ENCODE measurements at regions of chr11 and their contacts with region 1.

Region 1: GRCh38 chr11:43852057-43852636 is 28.5 kb upstream of the ALKBH3 start:
- DNase-seq: peak; percentile 63 to 81 (median 72)
- H3K4me3 ChIP-seq: no peak overlapping the region
- H3K27ac ChIP-seq: no peak overlapping the region
- H3K4me1 ChIP-seq: no peaks in the 10 kb centered on the region
- H3K27me3 ChIP-seq: no peaks in the 10 kb centered on the region

Region 2: GRCh38 chr11:43557553-43558110 is 294.5 kb before region 1 on chr11:
- CTCF ChIA-PET with region 1: interaction called, 10 read pairs
- POLR2A ChIA-PET with region 1: no interaction called
- DNase-seq: peak in 2 of 3 donors; percentile 29 to 32
- H3K4me3 ChIP-seq: peak overlapping the region in 1 of 7 experiments; percentile 36
- H3K27ac ChIP-seq: no peak overlapping the region
- H3K4me1 ChIP-seq: peaks cover 0 to 7% (median 2%) of the 10 kb centered on the region in 4 experiments
- H3K27me3 ChIP-seq: peaks cover 2 to 94% (median 38%) of the 10 kb centered on the region in 5 experiments

Region 3: DNA sequence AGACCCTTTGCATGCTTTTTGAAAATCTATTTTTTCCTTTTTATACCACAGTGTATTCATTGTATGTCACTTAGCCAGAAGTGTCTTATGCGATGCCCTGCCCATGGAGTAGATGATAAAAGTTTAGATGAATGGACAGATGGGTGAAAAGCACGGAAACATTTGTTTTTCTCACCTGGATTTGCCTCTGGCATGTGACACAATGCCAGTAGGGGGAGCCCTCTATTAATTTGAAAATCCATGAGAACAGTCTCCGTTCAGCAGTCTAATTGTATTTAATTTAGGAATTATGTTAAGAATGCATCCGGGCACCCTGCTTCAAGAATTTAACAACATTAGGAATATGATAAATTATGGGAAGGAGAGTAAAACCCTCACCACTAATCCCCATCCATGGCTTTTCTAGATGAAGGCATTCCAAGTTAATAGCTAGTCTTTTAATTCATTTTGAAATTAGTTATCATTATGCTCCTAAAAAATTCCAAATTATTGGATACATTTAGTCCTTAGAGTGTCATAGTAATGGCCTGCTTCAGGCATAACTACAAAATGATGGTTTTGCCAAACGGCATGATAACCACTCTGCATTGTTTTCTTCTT is 26.8 kb before region 1 on chr11:
- CTCF ChIA-PET with region 1: interaction called, 27 read pairs
- POLR2A ChIA-PET with region 1: interaction called, 3 read pairs
- DNase-seq: peak; percentile 21 to 29 (median 24)
- H3K4me3 ChIP-seq: no peak overlapping the region
- H3K27ac ChIP-seq: no peak overlapping the region
- H3K4me1 ChIP-seq: no peaks in the 10 kb centered on the region
- H3K27me3 ChIP-seq: no peaks in the 10 kb centered on the region

Region 4: GRCh38 chr11:43830928-43831440 is 21.2 kb before region 1 on chr11:
- CTCF ChIA-PET with region 1: interaction called, 27 read pairs
- POLR2A ChIA-PET with region 1: no interaction called
- DNase-seq: peak; percentile 25 to 68 (median 61)
- H3K4me3 ChIP-seq: no peak overlapping the region
- H3K27ac ChIP-seq: no peak overlapping the region
- H3K4me1 ChIP-seq: no peaks in the 10 kb centered on the region
- H3K27me3 ChIP-seq: no peaks in the 10 kb centered on the region

Region 5: DNA sequence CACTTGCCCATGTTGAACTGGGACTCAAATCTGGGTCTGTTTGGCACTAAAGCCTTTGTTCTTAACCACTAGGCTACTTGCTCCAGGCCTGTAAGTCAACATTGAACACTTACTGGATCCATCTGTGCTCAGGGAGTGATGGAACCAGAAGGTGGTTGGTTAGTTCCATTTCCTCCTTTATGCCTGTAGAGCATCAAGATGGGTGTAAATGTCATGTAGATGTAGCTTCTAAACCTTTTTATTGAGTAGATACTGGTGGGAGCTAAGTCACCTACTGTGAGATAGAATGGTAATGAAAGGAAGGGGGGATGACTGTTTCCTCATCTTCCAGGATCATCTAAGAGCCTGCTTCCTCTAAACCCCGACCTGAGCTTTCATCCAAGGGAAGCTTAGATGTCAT is 10.1 kb before region 1 on chr11:
- CTCF ChIA-PET with region 1: interaction called, 13 read pairs
- POLR2A ChIA-PET with region 1: no interaction called
- DNase-seq: no peak
- H3K4me3 ChIP-seq: no peak overlapping the region
- H3K27ac ChIP-seq: no peak overlapping the region
- H3K4me1 ChIP-seq: no peaks in the 10 kb centered on the region
- H3K27me3 ChIP-seq: no peaks in the 10 kb centered on the region

Region 6: GRCh38 chr11:43868852-43869567 is 16.9 kb after region 1 on chr11:
- CTCF ChIA-PET with region 1: interaction called, 15 read pairs
- POLR2A ChIA-PET with region 1: no interaction called
- DNase-seq: peak; percentile 88 to 97 (median 95)
- H3K4me3 ChIP-seq: peak overlapping the region in 3 of 7 experiments; percentile 0 to 31 (median 12)
- H3K27ac ChIP-seq: no peak overlapping the region
- H3K4me1 ChIP-seq: peaks cover 6 to 16% (median 15%) of the 10 kb centered on the region in 4 experiments
- H3K27me3 ChIP-seq: peaks cover 0 to 14% (median 2%) of the 10 kb centered on the region in 5 experiments